CD4-positive, alpha-beta memory T cell (primary cell): ENCODE measurements at regions of chr1 and their contacts with region 1.

Region 1: DNA sequence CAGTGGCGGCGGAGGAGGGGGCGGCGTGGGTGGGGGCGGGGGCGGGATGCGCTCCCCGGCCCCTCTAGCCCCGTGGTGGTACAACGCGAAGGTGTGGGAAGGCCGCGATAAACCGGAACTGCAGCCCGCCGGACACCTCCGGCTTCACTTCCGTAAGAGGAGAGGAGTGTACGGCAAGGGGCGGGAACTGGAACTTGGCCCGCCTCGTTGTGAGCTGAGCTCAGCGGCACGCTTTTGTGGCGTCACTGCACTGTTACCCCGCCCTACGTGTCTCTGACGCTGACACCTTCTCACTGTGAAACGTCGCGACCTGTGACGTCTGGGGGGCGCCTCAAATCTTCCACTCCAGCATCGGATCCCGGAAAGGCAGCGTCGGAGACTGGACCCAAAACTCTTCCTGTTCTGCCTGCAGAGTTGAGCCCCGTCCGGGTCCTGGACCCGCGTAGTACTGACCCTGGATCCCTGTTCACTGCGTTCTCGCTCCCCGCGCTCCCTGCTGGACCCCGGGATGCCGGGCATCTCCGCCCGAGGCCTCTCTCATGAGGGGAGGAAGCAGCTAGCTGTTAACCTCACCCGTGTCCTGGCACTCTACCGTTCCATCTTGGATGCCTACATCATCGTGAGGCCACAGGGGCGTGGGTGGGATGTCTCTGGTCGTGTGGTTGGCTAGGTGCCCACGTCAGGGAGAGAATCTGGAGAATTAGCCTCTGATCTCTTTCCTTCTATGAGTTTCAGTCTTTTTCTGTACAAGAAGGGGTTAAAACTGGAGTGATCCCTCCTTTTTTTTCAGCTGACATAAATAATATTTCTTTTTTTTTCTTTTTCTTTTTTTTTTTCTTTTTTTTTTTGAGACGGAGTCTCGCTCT is at the start of gene ISG20L2:
- DNase-seq: peak; percentile 92 to 99 (median 96)
- H3K4me3 ChIP-seq: peak within 1 kb of the TSS; percentile 96 to 99
- H3K4me3 Mint-ChIP-seq: no peak within 1 kb of the TSS
- H3K27ac ChIP-seq: peak within 1 kb of the TSS; percentile 90
- H3K27ac Mint-ChIP-seq: peak within 1 kb of the TSS in 3 of 7 donors; percentile 94 to 99 (median 98)
- H3K4me1 ChIP-seq: peaks cover 47% of the 10 kb centered on the region
- H3K4me1 Mint-ChIP-seq: peaks cover 8 to 19% (median 10%) of the 10 kb centered on the region in 4 donors
- H3K27me3 ChIP-seq: no peaks in the 10 kb centered on the region
- H3K27me3 Mint-ChIP-seq: no peaks in the 10 kb centered on the region
- total RNA-seq, gene ISG20L2: 47.9 to 53.1 TPM

Region 2: DNA sequence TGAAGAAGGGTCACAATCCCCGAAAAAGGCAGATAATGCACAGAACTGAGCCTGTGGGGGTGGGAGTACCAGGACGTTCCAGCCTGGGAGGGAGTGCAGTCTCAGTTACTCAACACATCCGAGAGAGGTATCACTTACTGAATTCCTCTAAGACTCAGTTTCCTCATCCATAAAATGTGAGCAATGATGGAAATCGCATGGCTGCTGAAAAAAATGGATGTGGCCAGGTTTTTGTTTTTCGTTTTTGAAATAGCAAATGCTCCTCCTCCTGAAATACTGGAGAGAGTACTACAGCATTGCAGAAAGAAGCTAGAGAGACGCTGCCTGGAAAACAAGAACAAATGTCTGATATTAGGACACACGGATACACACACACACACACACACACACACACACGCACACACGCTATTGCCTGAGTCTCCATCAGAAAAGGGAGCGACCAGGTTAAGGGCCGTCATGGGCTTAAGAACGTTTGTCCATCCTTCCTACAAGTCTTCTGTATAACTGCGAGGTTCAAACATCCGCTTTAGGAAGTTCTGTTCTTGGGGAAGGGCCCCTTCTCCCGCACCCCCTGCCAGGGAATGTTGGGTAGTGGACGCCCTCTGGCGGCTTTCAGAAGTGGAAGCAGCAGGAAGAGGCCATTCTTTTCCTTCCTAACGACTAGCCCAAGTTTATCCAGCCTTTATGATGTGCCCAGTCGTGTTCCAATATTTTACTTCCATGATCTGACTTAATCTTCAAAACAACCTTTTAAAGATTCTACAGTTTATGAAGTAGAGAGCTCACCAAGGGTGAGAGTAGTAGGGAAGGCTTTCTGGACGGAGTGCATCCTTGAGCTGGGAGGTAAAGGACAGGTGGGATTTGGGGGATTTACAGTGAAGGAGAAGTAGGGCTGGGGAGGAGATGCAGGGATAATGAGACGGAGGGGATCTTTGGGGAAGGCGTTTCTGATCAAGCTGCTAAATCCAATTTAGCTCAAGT is 50.9 kb before region 1 on chr1:
- CTCF ChIA-PET with region 1: interaction called, 25 read pairs
- POLR2A ChIA-PET with region 1: no interaction called
- intact Hi-C with region 1: no loop called
- DNase-seq: peak in 4 of 5 donors; percentile 28 to 37 (median 32)
- H3K4me3 ChIP-seq: no peak overlapping the region
- H3K4me3 Mint-ChIP-seq: peak overlapping the region in 7 of 8 donors; percentile 46 to 74 (median 54)
- H3K27ac ChIP-seq: no peak overlapping the region
- H3K27ac Mint-ChIP-seq: peak overlapping the region in 3 of 7 donors; percentile 21 to 69 (median 60)
- H3K4me1 ChIP-seq: peaks cover 14% of the 10 kb centered on the region
- H3K4me1 Mint-ChIP-seq: peaks cover 1 to 14% (median 12%) of the 10 kb centered on the region in 4 donors
- H3K27me3 ChIP-seq: peaks cover 34% of the 10 kb centered on the region
- H3K27me3 Mint-ChIP-seq: peaks cover 40 to 50% of the 10 kb centered on the region in 2 donors

Region 3: DNA sequence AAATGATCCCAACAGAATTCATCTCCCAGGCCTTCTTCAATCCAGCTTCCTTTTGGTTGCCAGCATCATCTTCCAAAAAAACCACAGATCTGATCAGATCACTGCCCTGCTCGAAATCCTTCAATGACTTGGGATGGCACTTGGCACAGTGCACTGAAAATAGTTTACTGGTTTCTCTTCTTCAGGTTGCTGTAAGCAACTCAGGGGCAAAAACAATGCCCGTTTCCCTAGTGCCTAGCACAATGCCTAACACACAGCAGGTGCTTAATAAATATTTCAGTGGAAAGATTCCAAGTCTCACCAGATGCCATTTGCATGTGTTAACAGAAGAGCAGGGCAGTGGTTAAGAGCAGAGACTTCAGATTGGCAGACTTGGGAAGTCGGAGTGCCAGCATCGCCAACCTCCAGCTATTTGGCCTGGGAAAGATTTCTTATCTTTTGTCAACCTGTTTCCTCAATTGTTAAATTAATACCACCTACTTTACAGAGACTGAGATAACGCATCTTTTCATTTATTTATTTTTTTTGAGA is 11.5 kb before region 1 on chr1:
- CTCF ChIA-PET with region 1: interaction called, 22 read pairs
- POLR2A ChIA-PET with region 1: interaction called, 7 read pairs
- intact Hi-C with region 1: no loop called
- DNase-seq: no peak
- H3K4me3 ChIP-seq: no peak overlapping the region
- H3K4me3 Mint-ChIP-seq: no peak overlapping the region
- H3K27ac ChIP-seq: no peak overlapping the region
- H3K27ac Mint-ChIP-seq: no peak overlapping the region
- H3K4me1 ChIP-seq: no peaks in the 10 kb centered on the region
- H3K4me1 Mint-ChIP-seq: peaks cover 3 to 10% (median 6%) of the 10 kb centered on the region in 4 donors
- H3K27me3 ChIP-seq: no peaks in the 10 kb centered on the region
- H3K27me3 Mint-ChIP-seq: no peaks in the 10 kb centered on the region

Region 4: GRCh38 chr1:156767101-156767878 is 38.5 kb after region 1 on chr1 and contains the start of gene PRCC:
- CTCF ChIA-PET with region 1: interaction called, 91 read pairs
- POLR2A ChIA-PET with region 1: interaction called, 79 read pairs
- intact Hi-C with region 1: loop called (anchors 1 kb)
- DNase-seq: peak; percentile 97 to 100 (median 99)
- H3K4me3 ChIP-seq: peak within 1 kb of the TSS; percentile 98 to 99
- H3K4me3 Mint-ChIP-seq: no peak within 1 kb of the TSS
- H3K27ac ChIP-seq: peak within 1 kb of the TSS; percentile 98
- H3K27ac Mint-ChIP-seq: no peak within 1 kb of the TSS
- H3K4me1 ChIP-seq: peaks cover 48% of the 10 kb centered on the region
- H3K4me1 Mint-ChIP-seq: peaks cover 24 to 39% (median 34%) of the 10 kb centered on the region in 4 donors
- H3K27me3 ChIP-seq: no peaks in the 10 kb centered on the region
- H3K27me3 Mint-ChIP-seq: no peaks in the 10 kb centered on the region
- total RNA-seq, gene PRCC: 60.9 to 61.3 TPM

Region 5: GRCh38 chr1:156838981-156839410 is 110.2 kb after region 1 on chr1:
- CTCF ChIA-PET with region 1: interaction called, 16 read pairs
- POLR2A ChIA-PET with region 1: no interaction called
- intact Hi-C with region 1: no loop called
- DNase-seq: peak in 4 of 5 donors; percentile 52 to 66 (median 55)
- H3K4me3 ChIP-seq: no peak overlapping the region
- H3K4me3 Mint-ChIP-seq: no peak overlapping the region
- H3K27ac ChIP-seq: no peak overlapping the region
- H3K27ac Mint-ChIP-seq: peak overlapping the region in 6 of 7 donors; percentile 5 to 81 (median 54)
- H3K4me1 ChIP-seq: peaks cover 12% of the 10 kb centered on the region
- H3K4me1 Mint-ChIP-seq: peaks cover 4 to 24% (median 10%) of the 10 kb centered on the region in 4 donors
- H3K27me3 ChIP-seq: peaks cover 11% of the 10 kb centered on the region
- H3K27me3 Mint-ChIP-seq: peaks cover 16 to 45% of the 10 kb centered on the region in 2 donors